ENCODE measurements at regions of chr3 and their contacts with region 1.

Region 1: GRCh38 chr3:100374521-100374920 is 26.4 kb downstream of the TOMM70 start:
- DNase-seq: no peak

Region 2: DNA sequence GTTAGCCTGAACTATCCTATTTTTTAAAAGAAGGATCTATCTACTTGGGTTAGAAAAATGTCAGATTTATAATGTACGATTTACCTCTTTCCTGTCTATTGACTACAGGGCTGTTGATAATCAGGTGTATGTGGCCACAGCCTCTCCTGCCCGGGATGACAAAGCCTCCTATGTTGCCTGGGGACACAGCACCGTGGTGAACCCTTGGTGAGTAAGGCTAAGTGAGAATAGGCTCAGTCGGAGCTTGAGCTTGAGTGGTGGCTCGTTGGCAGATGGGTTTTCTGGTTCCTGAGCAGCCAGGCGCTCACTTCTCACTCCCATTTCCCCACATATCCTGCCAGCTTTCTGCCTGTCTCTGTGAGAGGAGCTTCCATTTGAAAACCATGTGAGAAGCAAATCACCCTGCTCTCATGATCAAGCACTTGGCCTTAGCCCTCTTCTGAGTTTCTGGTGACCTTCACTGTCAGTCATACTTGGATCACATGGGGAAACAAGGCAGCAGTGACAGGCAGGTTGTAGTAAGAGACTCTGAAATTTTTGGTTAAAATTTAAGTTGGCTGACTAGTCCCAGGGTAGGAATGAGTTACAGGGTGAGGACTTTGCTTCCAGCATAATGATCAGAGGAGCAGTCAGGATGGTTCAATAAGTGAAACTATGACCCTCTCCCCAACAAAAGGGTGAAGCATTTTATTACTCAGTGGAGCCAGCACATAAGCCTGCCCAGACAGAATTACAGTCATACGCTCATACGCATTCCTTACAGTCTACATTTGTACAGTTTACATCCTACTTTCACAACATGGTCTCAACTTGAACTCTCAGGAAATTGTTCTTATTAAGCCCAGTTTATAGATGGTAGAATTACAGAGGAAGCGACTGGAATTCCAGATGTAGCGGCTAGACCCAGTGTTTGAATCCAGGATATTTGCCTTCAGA is 22.0 kb before region 1 on chr3:
- intact Hi-C with region 1: loop called in 1 of 2 experiments (anchors 1 kb)
- DNase-seq: no peak